Dorsolateral prefrontal cortex (tissue), 120 donors: ENCODE measurements at regions of chr6 and their contacts with region 1.

Region 1: DNA sequence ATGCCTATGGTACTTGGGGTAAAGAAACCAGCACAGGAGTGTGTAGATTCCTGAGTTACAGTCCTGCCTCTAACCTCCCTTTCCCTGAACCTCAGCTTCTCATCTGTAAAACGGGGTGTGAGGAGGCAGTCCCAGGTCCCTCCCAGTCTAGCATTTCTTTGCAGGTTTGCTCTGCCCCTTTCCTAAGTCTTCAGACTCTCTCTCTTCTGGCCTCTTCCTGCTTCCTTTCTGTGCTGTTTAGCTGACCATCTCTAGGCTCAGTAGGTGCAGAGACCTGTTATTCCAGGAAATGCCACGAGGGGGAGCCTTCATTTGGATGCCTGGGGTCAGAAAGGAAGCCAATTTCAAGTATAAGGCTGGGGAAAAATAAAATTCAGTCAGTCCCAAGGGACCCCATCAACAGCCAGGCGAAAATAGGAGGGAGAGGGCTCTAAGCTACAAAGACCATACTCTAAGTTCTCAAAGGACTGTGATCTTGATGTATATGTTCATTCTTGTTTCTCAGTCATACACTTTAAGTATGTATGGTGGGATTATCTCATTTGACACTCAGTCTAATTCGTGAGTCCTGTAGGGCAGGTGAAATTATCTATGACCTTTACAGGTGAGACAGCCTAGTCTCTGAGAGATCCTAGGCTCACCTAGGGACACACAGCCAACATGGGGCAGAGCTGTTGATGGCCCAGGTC is 89.1 kb downstream of the NCR2 start:
- DNase-seq: peak; percentile 59 to 93 (median 82)
- H3K4me3 ChIP-seq: no peak overlapping the region
- H3K27ac ChIP-seq: peak overlapping the region in 19 of 59 donors; percentile 1 to 95 (median 28)
- H3K27me3 ChIP-seq: peaks cover 0 to 14% (median 0%) of the 10 kb centered on the region in 45 donors
- CTCF ChIP-seq: peak; percentile 73 to 93 (median 87)

Region 2: DNA sequence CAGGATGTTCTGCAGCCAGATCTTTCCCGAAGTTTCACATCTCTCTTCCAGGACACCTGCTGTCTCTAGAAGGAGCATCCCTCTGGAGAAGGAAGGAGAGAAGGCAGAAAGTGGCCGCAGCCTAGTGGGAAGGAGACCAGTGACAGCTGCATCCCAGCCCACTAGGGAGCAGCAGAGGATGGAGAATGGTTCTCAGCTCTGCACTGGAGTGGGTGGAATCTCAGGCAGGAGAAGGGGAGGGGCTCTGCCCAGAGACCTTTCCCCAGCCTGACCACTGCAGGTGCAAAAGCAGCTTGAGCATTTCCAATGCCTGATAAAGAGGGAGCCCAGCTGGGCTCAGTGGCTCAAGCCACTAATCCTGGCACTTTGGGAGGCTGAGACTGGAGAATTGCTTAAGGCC is 56.8 kb before region 1 on chr6:
- intact Hi-C with region 1: loop called (anchors 2 to 5 kb)
- DNase-seq: peak; percentile 49 to 79 (median 74)
- H3K4me3 ChIP-seq: no peak overlapping the region
- H3K27ac ChIP-seq: no peak overlapping the region
- H3K27me3 ChIP-seq: peaks cover 0 to 61% (median 30%) of the 10 kb centered on the region in 45 donors
- CTCF ChIP-seq: peak; percentile 19 to 91 (median 80)

Region 3: GRCh38 chr6:41505122-41506049 is 80.9 kb after region 1 on chr6:
- intact Hi-C with region 1: loop called in 1 of 2 experiments (anchors 5 kb)
- DNase-seq: peak in 4 of 10 donors; percentile 8 to 54 (median 20)
- H3K4me3 ChIP-seq: peak overlapping the region in 58 of 59 donors; percentile 0 to 68 (median 48)
- H3K27ac ChIP-seq: peak overlapping the region in 10 of 59 donors; percentile 0 to 77 (median 34)
- H3K27me3 ChIP-seq: peaks cover 0 to 41% (median 8%) of the 10 kb centered on the region in 45 donors
- CTCF ChIP-seq: peak in 1 of 56 donors; percentile 19

Region 4: DNA sequence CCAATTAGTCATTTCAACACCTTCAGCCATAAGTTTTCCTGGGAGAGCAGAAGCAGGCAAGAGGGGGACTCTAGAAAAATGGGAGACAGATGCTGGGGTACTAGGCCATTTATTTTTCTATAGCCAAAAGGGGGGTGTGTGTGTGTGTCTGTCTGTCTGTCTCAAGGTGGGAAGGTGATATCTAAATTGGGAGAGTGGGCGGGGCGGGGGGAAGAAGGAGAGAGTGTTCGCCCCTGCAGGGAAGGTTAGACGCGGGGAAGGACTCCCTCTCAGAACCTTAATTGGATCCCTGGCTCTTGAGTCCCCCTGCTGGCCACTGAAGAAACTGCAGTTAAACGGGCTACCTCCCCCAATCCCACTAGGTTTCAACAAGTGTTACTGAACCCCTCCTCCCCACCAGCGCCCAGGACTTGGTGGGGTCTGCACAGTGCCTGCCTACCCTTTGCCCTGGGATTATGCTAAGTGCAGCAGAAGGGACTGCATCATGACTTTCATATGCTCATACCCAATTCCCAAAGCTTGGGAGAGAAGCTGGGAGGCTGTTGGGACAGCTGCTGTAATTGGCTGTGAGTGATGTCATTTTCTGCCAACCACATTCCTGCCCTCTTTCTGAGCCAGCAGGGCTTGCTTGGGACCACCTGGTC is 167.5 kb after region 1 on chr6:
- intact Hi-C with region 1: loop called (anchors 2 kb)
- DNase-seq: peak in 9 of 10 donors; percentile 70 to 84 (median 79)
- H3K4me3 ChIP-seq: no peak overlapping the region
- H3K27ac ChIP-seq: peak overlapping the region in 1 of 59 donors; percentile 19
- H3K27me3 ChIP-seq: no peaks in the 10 kb centered on the region
- CTCF ChIP-seq: peak; percentile 83 to 98 (median 94)

Region 5: DNA sequence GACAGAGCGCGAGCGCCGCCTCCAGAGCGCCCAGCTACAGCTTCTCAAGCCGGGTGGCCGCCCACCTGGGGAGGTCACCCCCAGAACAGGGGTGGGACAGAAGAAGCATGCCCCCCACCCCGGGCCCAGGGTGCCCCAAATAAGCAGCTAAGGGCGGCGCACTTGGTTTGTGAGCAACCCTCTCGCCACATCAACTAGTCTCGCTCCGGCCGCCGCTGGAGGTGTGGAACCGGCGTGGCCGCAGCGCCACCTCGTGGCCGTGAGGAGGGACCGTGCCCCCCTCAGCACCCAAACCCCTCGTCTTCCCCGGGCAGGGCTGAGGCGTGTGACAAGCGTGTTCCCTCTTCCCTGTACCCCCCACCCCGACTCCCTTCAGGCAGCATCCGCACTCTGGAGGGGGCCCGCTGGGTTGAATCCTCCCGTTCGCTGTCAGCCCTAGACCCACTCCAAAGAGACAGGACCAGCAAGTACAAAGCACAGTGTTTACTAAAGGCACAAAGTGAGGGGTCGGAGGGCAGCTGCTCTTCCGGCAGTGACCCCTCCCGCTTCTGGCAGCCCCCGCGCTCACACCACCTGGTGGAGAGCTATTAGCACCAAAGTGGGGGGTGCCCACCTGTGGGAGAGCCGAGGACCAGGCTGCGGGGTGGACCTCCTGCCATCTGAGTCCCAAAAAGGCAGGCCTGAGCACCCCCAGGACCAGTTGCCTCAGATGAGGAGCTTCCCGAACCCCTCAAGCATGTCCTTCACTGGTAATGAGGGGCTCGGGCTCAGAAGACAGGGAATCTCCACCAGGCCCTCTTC is 259.2 kb after region 1 on chr6:
- intact Hi-C with region 1: loop called (anchors 5 kb)
- DNase-seq: peak; percentile 70 to 88 (median 85)
- H3K4me3 ChIP-seq: peak overlapping the region in 58 of 59 donors; percentile 15 to 71 (median 54)
- H3K27ac ChIP-seq: peak overlapping the region; percentile 77 to 100 (median 95)
- H3K27me3 ChIP-seq: no peaks in the 10 kb centered on the region
- CTCF ChIP-seq: peak; percentile 83 to 98 (median 95)

Region 6: GRCh38 chr6:41713161-41713649 is 288.7 kb after region 1 on chr6:
- intact Hi-C with region 1: no loop called
- DNase-seq: peak; percentile 61 to 96 (median 85)
- H3K4me3 ChIP-seq: peak overlapping the region in 19 of 59 donors; percentile 2 to 40 (median 17)
- H3K27ac ChIP-seq: peak overlapping the region; percentile 85 to 100 (median 99)
- H3K27me3 ChIP-seq: no peaks in the 10 kb centered on the region
- CTCF ChIP-seq: peak in 1 of 56 donors; percentile 1